ENCODE measurements at regions of chr9 and their contacts with region 1.

Region 1: DNA sequence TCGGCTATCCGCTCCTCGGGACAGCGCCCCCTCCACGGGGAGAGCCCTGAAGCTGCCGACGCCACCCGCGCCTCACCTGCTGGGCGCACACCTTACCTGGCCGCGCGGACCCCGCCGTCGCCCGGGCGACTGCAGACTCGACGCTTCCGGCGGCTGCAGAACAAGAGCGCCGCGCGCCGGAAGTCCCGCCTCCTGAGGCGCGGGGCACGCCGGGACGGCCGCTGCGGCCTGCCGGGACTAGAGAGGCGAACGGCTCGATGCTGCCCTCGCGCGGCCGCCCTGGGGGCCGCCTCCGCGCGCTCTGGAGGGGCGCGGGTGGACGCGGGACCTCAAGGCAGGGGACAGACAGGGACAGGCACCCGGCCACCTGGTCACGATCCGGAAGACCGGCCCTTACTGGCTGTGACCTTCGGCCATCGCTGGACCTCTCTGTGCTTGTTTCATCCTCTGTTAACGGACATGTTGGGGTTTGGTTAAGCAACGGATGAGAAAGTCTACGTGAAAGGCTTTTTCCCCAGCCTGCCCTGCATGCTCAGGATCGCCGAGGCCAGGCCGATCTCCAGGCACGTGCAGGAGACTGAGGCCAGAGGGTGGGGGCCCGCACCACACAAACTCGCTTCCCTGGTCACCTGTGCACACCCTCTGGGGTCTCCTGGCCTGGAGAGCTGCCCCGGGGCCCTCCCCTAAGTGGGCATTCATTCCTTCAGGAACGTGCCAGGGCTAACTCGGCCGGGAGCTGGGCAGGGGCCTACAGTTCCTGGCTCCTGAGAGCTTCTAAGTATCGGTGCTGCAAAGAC is at the start of gene SNAPC4:
- DNase-seq: peak; percentile 92 to 93 (median 93)
- ATAC-seq: peak; percentile 95
- H3K4me3 ChIP-seq: peak within 1 kb of the TSS; percentile 98
- H3K27ac ChIP-seq: peak within 1 kb of the TSS; percentile 69
- H3K4me1 ChIP-seq: peaks cover 7 to 41% of the 10 kb centered on the region in 2 experiments; a peak in 4 of 5 replicates
- H3K27me3 ChIP-seq: no peaks in the 10 kb centered on the region
- CTCF ChIP-seq: peak; percentile 92 to 94 (median 93)
- EP300 ChIP-seq: 0 out of 2 replicates have a peak, but pooled peaks have one; percentile 4
- POLR2A ChIP-seq: peak; percentile 68
- RAD21 ChIP-seq: peak; percentile 83 to 85
- polyA plus RNA-seq, gene SNAPC4: 0.21 to 0.46 TPM

Region 2: GRCh38 chr9:136339173-136339957 is 60.9 kb before region 1 on chr9:
- CTCF ChIA-PET with region 1: interaction called, 10 read pairs
- POLR2A ChIA-PET with region 1: interaction called, 3 read pairs
- in situ Hi-C with region 1: no loop called
- intact Hi-C with region 1: loop called (anchors 1 kb)
- DNase-seq: peak; percentile 71 to 84 (median 75)
- ATAC-seq: peak; percentile 87
- H3K4me3 ChIP-seq: no peak overlapping the region
- H3K27ac ChIP-seq: no peak overlapping the region
- H3K4me1 ChIP-seq: peaks cover 7 to 96% of the 10 kb centered on the region in 2 experiments
- H3K27me3 ChIP-seq: no peaks in the 10 kb centered on the region
- CTCF ChIP-seq: peak; percentile 94 to 97 (median 95)
- EP300 ChIP-seq: no peak
- POLR2A ChIP-seq: no peak
- RAD21 ChIP-seq: peak; percentile 80 to 82

Region 3: GRCh38 chr9:136363606-136364370 is 36.4 kb before region 1 on chr9 and contains the start of gene DNLZ:
- CTCF ChIA-PET with region 1: interaction called, 3 read pairs
- POLR2A ChIA-PET with region 1: interaction called, 7 read pairs
- in situ Hi-C with region 1: no loop called
- intact Hi-C with region 1: loop called (anchors 1 kb)
- DNase-seq: peak; percentile 87 to 93 (median 90)
- ATAC-seq: peak; percentile 75
- H3K4me3 ChIP-seq: peak within 1 kb of the TSS; percentile 99
- H3K27ac ChIP-seq: peak within 1 kb of the TSS; percentile 97
- H3K4me1 ChIP-seq: peaks cover 11 to 93% of the 10 kb centered on the region in 2 experiments
- H3K27me3 ChIP-seq: no peaks in the 10 kb centered on the region
- CTCF ChIP-seq: peak; percentile 84 to 94 (median 93)
- EP300 ChIP-seq: no peak
- POLR2A ChIP-seq: peak; percentile 44
- RAD21 ChIP-seq: peak; percentile 50 to 54
- polyA plus RNA-seq, gene DNLZ: 0.17 to 0.36 TPM

Measured in K562 (cell line).